CD4-positive, alpha-beta memory T cell (primary cell): ENCODE measurements at regions of chr6 and their contacts with region 1.

Region 1: DNA sequence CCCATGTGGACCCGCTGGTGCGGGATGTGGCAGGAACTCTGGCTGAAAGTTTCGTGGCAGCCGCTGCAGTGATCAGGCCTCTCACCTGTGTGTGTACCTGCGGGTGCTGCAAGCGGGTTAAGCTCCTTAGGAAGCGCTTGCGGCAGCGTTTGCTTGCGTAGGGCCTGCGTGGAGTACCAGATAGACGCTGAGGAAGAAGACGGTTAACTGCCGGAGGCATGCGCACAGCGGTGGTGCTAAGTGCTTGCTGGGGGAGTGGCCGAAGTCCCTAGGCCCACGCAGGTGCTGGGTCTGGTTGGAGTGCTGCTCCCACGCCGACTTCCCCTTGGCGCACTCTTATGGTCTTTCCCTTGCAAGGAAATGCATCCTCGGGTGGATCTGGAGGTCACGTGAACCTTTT is 23.0 kb downstream of the ZSCAN31 start:
- DNase-seq: no peak
- H3K4me3 ChIP-seq: no peak overlapping the region
- H3K4me3 Mint-ChIP-seq: no peak overlapping the region
- H3K27ac ChIP-seq: no peak overlapping the region
- H3K27ac Mint-ChIP-seq: no peak overlapping the region
- H3K4me1 ChIP-seq: no peaks in the 10 kb centered on the region
- H3K4me1 Mint-ChIP-seq: no peaks in the 10 kb centered on the region
- H3K27me3 ChIP-seq: peaks cover 3% of the 10 kb centered on the region
- H3K27me3 Mint-ChIP-seq: peaks cover 25 to 30% of the 10 kb centered on the region in 2 donors

Region 2: GRCh38 chr6:28225056-28225834 is 87.7 kb before region 1 on chr6 and contains the start of gene ZSCAN9:
- CTCF ChIA-PET with region 1: no interaction called
- POLR2A ChIA-PET with region 1: no interaction called
- intact Hi-C with region 1: no loop called
- DNase-seq: peak in 3 of 5 donors; percentile 15 to 26 (median 16)
- H3K4me3 ChIP-seq: peak within 1 kb of the TSS; percentile 60 to 74
- H3K4me3 Mint-ChIP-seq: peak within 1 kb of the TSS; percentile 91 to 97 (median 94)
- H3K27ac ChIP-seq: no peak within 1 kb of the TSS
- H3K27ac Mint-ChIP-seq: peak within 1 kb of the TSS in 6 of 7 donors; percentile 36 to 92 (median 82)
- H3K4me1 ChIP-seq: peaks cover 7% of the 10 kb centered on the region
- H3K4me1 Mint-ChIP-seq: peaks cover 8 to 15% (median 8%) of the 10 kb centered on the region in 4 donors
- H3K27me3 ChIP-seq: peaks cover 14% of the 10 kb centered on the region
- H3K27me3 Mint-ChIP-seq: peaks cover 31% of the 10 kb centered on the region in 2 donors
- total RNA-seq, gene ZSCAN9: 3.4 to 4.4 TPM

Region 3: DNA sequence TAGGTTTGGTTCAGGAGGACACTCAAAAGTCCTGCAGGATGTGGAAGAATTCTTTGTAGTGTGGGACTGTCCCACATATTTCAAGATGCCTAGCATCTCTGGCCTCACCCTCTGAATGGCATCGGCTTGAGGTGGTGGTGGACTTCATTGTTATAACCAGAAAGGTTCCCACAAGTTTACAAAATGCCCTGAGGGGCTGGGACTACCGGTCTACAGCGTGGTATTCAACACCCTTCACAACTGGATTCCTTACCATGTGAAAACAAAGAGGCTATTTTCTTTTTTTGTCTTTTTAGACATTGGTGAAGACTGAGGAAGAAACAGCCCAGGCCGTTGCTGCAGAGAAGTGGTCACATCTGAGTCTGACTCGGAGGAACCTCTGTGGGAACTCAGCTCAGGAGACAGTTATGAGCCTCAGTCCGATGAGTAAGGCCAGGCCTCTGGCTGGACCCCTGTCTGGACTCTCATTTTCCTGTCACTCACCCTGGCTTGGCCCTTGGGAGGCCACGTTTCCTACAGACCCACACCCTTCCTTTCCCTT is 16.3 kb before region 1 on chr6:
- CTCF ChIA-PET with region 1: no interaction called
- POLR2A ChIA-PET with region 1: no interaction called
- intact Hi-C with region 1: no loop called
- DNase-seq: no peak
- H3K4me3 ChIP-seq: no peak overlapping the region
- H3K4me3 Mint-ChIP-seq: no peak overlapping the region
- H3K27ac ChIP-seq: no peak overlapping the region
- H3K27ac Mint-ChIP-seq: no peak overlapping the region
- H3K4me1 ChIP-seq: no peaks in the 10 kb centered on the region
- H3K4me1 Mint-ChIP-seq: no peaks in the 10 kb centered on the region
- H3K27me3 ChIP-seq: no peaks in the 10 kb centered on the region
- H3K27me3 Mint-ChIP-seq: peaks cover 0 to 3% of the 10 kb centered on the region in 2 donors

Region 4: GRCh38 chr6:28383235-28384142 is 70.5 kb after region 1 on chr6:
- CTCF ChIA-PET with region 1: no interaction called
- POLR2A ChIA-PET with region 1: no interaction called
- intact Hi-C with region 1: loop called (anchors 2 kb)
- DNase-seq: peak in 2 of 5 donors; percentile 3 to 10
- H3K4me3 ChIP-seq: no peak overlapping the region
- H3K4me3 Mint-ChIP-seq: peak overlapping the region; percentile 13 to 72 (median 59)
- H3K27ac ChIP-seq: no peak overlapping the region
- H3K27ac Mint-ChIP-seq: peak overlapping the region in 2 of 7 donors; percentile 36 to 44
- H3K4me1 ChIP-seq: no peaks in the 10 kb centered on the region
- H3K4me1 Mint-ChIP-seq: peaks cover 0 to 18% (median 9%) of the 10 kb centered on the region in 4 donors
- H3K27me3 ChIP-seq: no peaks in the 10 kb centered on the region
- H3K27me3 Mint-ChIP-seq: no peaks in the 10 kb centered on the region